ENCODE measurements at regions of chr17 and their contacts with region 1.

Region 1: DNA sequence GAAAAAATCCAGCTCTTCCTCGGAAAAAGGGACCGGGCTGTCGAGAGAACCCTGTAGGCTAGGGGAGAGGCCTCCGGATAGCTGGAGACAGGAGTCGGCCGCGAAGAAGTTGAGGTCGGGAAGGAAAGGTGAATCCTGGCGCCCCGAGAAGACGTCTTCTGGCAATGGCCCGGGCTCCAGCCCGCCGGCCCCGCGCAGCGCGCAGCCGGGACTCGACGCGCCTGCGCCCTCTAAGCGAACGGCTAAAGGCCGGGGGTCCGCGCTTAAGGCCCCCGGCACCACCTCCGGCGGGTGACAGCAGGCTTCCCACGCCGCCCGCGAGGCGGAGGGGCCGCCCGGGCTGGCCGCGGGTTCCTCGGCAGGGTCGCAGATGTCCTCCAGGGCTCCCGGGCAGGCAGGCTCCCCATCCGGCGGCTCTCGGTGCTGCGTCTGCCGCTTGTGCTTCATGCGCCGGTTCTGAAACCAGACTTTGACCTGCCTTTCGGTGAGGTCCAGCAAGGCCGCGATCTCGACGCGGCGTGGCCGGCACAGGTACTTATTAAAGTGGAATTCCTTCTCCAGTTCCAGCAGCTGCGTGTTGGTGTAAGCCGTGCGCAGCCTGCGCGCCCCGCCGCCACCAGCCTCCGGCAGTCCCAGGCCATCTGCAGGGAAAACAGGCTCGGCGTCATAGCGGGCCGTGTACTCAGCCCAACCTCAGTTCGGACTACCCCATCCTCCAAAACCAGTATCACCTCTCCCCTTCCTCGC is 1.6 kb downstream of the HOXB2 start:
- DNase-seq: peak; percentile 60
- H3K4me3 Mint-ChIP-seq: peak overlapping the region; percentile 95
- H3K27ac Mint-ChIP-seq: peak overlapping the region; percentile 96
- H3K4me1 Mint-ChIP-seq: peaks cover 57% of the 10 kb centered on the region
- H3K27me3 Mint-ChIP-seq: peaks cover 8% of the 10 kb centered on the region

Region 2: GRCh38 chr17:48351831-48352332 is 191.4 kb before region 1 on chr17:
- intact Hi-C with region 1: loop called (anchors 2 kb)
- DNase-seq: no peak
- H3K4me3 Mint-ChIP-seq: no peak overlapping the region
- H3K27ac Mint-ChIP-seq: no peak overlapping the region
- H3K4me1 Mint-ChIP-seq: peaks cover 7% of the 10 kb centered on the region
- H3K27me3 Mint-ChIP-seq: no peaks in the 10 kb centered on the region

Region 3: GRCh38 chr17:48429638-48430586 is 113.4 kb before region 1 on chr17 and contains the start of gene SKAP1:
- intact Hi-C with region 1: loop called (anchors 2 kb)
- DNase-seq: peak; percentile 68
- H3K4me3 Mint-ChIP-seq: peak within 1 kb of the TSS; percentile 98
- H3K27ac Mint-ChIP-seq: peak within 1 kb of the TSS; percentile 99
- H3K4me1 Mint-ChIP-seq: peaks cover 72% of the 10 kb centered on the region
- H3K27me3 Mint-ChIP-seq: peaks cover 1% of the 10 kb centered on the region
- total RNA-seq, gene SKAP1: 48.7 and 51.9 TPM in 2 replicates

Region 4: DNA sequence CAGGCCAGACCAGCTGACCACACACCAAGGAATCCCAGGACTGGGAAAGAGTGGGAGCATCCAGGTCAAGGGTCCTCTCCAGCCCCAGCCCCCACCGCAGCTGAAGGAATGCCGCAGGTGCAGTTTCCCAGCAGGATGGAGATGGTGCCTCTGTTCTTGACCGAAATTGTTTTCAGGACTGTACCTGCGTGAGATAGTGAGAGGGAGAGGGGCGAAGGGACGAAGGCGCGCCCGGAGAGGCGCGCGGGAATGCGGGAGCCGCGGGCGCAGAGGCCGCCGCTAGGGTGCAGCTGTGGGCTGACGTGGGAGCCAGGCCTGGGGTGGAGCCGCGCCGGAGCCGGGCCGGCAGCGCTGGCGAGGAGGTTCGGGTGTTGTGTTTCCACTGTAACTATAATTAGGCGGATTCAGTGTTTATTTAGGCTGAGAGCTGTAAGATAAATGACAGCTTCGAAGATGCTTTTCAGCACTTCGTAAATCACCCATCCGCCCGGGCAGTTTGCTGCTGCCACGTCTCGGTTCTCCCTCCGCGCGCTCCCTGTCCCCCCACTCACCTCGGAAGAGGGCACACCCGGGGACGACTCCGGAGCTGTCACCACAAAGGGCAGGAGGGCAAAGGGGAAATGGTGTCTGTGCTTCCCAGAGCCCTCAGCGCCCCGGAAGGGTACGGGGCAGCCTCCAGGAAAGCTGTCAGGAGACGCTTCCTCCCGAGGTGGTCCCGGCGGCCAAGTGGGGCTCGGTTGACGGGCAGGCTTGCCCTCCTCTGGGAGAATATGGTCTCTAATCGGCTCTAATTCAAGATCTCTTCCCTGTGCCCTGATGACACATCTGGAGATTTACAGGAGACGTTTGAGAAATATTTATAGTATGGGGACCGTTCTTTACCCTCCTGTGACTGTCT is 50.6 kb before region 1 on chr17:
- intact Hi-C with region 1: loop called (anchors 1 kb)
- DNase-seq: peak; percentile 64
- H3K4me3 Mint-ChIP-seq: peak overlapping the region; percentile 45
- H3K27ac Mint-ChIP-seq: peak overlapping the region; percentile 88
- H3K4me1 Mint-ChIP-seq: peaks cover 54% of the 10 kb centered on the region
- H3K27me3 Mint-ChIP-seq: peaks cover 19% of the 10 kb centered on the region

Region 5: DNA sequence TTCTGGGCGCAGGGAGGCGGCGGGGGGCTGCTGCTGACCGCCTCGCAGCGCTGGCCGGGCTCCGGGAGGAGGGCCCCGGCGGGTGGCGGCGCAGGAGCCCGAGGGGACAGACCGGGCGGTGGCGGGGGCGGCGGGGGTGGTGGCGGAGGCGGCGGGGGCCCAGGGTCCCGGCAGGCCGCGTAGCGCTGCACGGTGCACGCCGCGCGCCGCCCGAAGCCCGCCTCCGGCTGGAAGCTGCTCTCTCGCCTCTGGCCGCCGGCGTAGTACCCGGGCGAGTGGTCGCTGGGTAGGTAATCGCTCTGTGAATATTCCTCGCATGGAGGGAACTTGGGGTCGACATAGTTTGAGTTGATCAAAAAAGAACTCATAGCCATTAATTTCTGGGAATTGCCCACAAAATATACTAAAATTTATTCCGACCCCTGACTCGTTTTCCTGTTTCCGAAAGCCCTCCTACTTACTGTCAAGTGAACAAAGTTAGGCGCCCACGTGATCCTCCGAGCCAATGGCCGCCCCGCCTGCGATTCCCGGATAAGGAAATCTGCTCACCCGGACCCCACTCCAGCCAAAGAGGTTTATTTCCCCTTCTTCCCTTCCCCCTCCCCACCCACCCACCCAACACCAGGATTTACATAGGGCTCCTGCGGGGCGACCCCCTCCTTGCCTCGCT is 34.8 kb after region 1 on chr17 and contains the start of gene HOXB4:
- intact Hi-C with region 1: loop called (anchors 1 kb)
- DNase-seq: peak; percentile 68
- H3K4me3 Mint-ChIP-seq: peak within 1 kb of the TSS; percentile 91
- H3K27ac Mint-ChIP-seq: peak within 1 kb of the TSS; percentile 86
- H3K4me1 Mint-ChIP-seq: peaks cover 66% of the 10 kb centered on the region
- H3K27me3 Mint-ChIP-seq: peaks cover 37% of the 10 kb centered on the region
- total RNA-seq, gene HOXB4: 3.8 and 4.2 TPM in 2 replicates

Measured in activated T-helper 1 cell treated with anti-CD3 and anti-CD28 coated beads, Interleukin-12 subunit alpha, Interleukin-12 subunit beta, Interleukin-2, Interleukin-4 antibody, amounts not matched to agents 30 ng/mL and 10 ng/mL and 1 ng/mL, durations not matched to agents 14 hours and 24 hours and 36 hours (primary cell).